Vagina (tissue), 2 donors: ENCODE measurements at regions of chr3 and their contacts with region 1.

Region 1: GRCh38 chr3:10357592-10358308 is 36.8 kb upstream of the SEC13 start:
- DNase-seq: no peak
- H3K4me3 ChIP-seq: no peak overlapping the region
- H3K27ac ChIP-seq: no peak overlapping the region
- H3K4me1 ChIP-seq: no peaks in the 10 kb centered on the region
- H3K27me3 ChIP-seq: no peaks in the 10 kb centered on the region
- CTCF ChIP-seq: no peak
- POLR2A ChIP-seq: no peak

Region 2: GRCh38 chr3:9214599-9214998 is 1143.2 kb before region 1 on chr3:
- intact Hi-C with region 1: loop called (anchors 5 kb)
- DNase-seq: no peak
- H3K4me3 ChIP-seq: no peak overlapping the region
- H3K27ac ChIP-seq: peak overlapping the region; percentile 43
- H3K4me1 ChIP-seq: no peaks in the 10 kb centered on the region
- H3K27me3 ChIP-seq: no peaks in the 10 kb centered on the region
- CTCF ChIP-seq: no peak
- POLR2A ChIP-seq: no peak